Activated CD4-positive, alpha-beta T cell treated with anti-CD3 and anti-CD28 coated beads for 36 hours (primary cell): ENCODE measurements at regions of chr9 and their contacts with region 1.

Region 1: DNA sequence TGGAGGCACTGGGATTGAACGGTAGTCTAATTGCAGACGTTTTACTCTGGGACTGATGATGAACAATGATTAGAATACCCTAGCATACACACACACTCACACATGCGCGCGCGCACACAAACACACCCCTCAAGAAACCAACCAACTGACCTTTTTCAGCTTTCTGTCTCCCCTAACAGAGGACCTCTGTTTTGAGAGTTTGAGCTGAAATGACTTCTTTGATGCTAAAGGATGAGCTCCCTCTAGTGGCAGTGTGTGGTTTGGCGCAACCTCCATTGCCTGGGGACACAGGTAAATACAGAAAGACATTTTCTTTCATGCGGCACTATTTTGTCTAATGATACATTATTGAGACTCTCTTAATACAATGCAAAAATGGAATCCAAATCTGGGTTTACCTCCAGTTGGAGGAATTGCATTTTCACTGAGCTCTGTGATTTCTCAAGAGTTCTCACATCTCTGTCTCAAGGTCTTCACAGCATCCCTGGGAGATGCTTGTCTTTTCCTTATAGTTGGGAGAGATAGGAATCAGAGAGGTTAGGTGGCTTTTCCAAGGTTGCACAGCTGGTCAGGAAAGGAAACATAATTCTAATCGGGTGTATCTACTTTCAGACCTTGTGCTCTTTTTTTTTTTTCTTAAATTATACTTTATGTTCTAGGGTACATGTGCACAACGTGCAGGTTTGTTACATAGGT is 187.5 kb downstream of the TMEM38B start:
- DNase-seq: peak; percentile 81
- ATAC-seq: peak; percentile 73
- H3K4me3 Mint-ChIP-seq: no peak overlapping the region
- H3K27ac Mint-ChIP-seq: no peak overlapping the region
- H3K4me1 Mint-ChIP-seq: peaks cover 10% of the 10 kb centered on the region
- H3K27me3 Mint-ChIP-seq: no peaks in the 10 kb centered on the region

Region 2: DNA sequence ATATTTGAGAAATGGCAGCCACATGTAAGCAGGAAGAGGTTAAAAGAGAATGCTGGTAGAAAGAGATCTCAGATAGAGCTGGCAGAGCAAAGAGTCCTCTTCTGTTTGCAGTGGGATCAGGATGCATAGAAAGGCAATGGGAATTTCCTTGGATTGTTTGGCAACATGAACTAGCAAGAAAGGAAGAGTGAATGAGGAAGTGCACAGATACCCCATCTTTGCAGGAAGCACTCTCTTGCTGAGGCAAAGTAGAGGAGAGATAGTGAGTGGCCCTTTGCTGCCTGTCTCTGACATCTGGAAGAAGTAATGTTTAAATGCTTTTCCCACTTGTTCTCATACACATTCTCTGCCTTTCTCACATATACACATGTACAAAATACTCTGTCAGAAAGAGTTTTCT is 309.3 kb before region 1 on chr9:
- CTCF ChIA-PET with region 1: no interaction called
- POLR2A ChIA-PET with region 1: no interaction called
- intact Hi-C with region 1: no loop called
- DNase-seq: no peak
- ATAC-seq: no peak
- H3K4me3 Mint-ChIP-seq: no peak overlapping the region
- H3K27ac Mint-ChIP-seq: no peak overlapping the region
- H3K4me1 Mint-ChIP-seq: no peaks in the 10 kb centered on the region
- H3K27me3 Mint-ChIP-seq: no peaks in the 10 kb centered on the region

Region 3: DNA sequence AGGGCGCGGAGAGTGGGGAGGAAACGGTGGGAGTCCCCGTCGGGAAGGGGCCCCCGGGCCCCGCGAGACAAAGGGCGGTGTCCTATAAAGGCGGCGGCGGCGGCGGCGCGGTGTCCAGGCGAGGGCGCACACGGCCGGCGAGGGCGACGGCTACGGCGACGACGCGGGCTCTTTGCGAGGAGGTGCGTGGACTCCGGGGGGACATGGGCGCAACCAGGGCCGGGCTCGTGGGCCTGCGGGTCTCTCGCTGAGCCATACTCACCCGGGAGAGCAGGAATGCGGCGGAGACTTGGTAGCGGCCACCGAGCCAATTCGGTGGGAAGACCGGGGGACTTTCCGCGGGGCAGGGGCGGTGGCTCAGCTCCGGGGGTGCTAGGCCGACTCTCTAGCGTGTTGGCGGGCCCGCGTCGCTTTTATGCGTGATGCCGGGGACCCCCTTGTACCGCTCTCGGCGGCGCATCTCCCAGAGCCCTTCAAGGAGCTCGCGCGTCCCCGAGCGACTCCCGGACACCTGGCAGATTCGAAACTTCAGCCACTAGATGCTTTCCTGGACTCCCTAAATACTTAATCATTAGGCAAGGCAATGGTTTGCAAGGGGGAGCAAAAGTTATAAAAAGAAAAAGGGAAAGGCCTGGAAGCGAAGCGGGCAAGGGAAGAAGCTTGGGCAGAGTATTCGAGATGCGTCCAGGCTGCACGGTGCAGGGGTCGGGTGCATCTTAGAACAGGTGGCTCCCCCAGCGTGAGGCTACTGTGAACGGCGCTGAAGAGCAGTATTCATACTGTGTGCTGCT is 225.5 kb before region 1 on chr9:
- CTCF ChIA-PET with region 1: no interaction called
- POLR2A ChIA-PET with region 1: no interaction called
- intact Hi-C with region 1: loop called in 1 of 2 experiments (anchors 10 kb)
- DNase-seq: peak; percentile 44
- ATAC-seq: peak; percentile 70
- H3K4me3 Mint-ChIP-seq: peak overlapping the region; percentile 52
- H3K27ac Mint-ChIP-seq: no peak overlapping the region
- H3K4me1 Mint-ChIP-seq: peaks cover 6% of the 10 kb centered on the region
- H3K27me3 Mint-ChIP-seq: peaks cover 28% of the 10 kb centered on the region

Region 4: GRCh38 chr9:105842023-105842644 is 39.7 kb before region 1 on chr9:
- CTCF ChIA-PET with region 1: interaction called, 66 read pairs
- POLR2A ChIA-PET with region 1: no interaction called
- intact Hi-C with region 1: loop called (anchors 1 kb)
- DNase-seq: peak; percentile 54
- ATAC-seq: no peak
- H3K4me3 Mint-ChIP-seq: no peak overlapping the region
- H3K27ac Mint-ChIP-seq: no peak overlapping the region
- H3K4me1 Mint-ChIP-seq: no peaks in the 10 kb centered on the region
- H3K27me3 Mint-ChIP-seq: no peaks in the 10 kb centered on the region